Caco-2 (cell line): ENCODE measurements at regions of chr7 and their contacts with region 1.

Region 1: DNA sequence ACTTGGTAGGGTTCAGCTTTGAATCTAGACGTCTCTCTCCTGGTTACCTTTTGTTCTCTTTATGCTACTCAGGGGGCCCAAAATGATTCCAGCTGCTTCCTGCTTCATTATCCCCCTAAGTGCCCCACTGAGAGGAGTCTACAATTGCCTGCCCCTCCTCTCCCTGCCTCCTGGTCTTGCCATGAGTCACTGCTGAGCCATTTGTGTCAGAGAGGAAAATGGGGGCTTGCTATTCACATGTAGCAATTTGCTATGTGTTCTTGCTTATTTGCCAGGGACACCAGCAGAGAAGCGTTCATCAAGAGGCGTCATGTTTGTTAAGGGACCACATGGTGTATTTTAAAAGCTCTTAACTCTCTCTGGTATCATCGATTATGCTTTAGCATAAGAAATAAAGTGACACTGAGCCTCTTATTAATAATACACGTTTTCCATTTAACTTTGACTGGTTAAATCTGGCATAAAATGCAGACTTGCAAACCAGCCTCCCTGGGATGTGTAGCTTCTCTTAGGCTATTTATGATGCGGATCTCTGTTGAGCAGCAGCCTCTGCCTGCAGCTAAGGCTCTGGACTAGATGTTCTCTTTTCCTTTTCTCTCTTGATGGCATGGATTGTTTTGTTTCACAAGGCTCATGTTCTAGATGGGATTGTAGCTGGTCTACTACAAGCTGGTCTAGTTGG is 239.3 kb downstream of the AUTS2 start:
- DNase-seq: no peak
- H3K4me3 ChIP-seq: no peak overlapping the region
- H3K4me3 Mint-ChIP-seq: no peak overlapping the region
- H3K27ac Mint-ChIP-seq: no peak overlapping the region
- H3K4me1 ChIP-seq: no peaks in the 10 kb centered on the region
- H3K4me1 Mint-ChIP-seq: no peaks in the 10 kb centered on the region
- H3K27me3 ChIP-seq: no peaks in the 10 kb centered on the region
- H3K27me3 Mint-ChIP-seq: peaks cover 14% of the 10 kb centered on the region
- CTCF ChIP-seq: no peak

Region 2: DNA sequence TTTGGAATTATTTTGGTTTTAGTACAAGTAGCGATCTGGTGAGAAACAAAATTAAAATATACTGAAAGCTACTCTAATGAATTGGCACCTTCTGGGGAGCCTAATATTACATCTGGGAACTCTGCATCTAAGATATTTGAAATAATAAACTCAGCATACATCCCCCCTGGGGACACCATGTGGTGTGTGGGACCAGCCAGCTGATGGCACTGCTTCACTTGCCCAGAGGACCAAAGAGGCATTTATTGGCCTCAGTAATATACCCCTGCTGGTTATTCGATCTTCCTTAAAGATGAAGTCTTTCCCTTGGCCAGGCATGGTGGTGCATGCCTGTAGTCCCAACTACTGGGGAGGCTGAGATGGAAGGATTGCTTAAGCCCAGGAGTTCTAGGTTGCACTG is 434.4 kb before region 1 on chr7:
- CTCF ChIA-PET with region 1: no interaction called
- POLR2A ChIA-PET with region 1: no interaction called
- intact Hi-C with region 1: no loop called
- DNase-seq: no peak
- H3K4me3 ChIP-seq: no peak overlapping the region
- H3K4me3 Mint-ChIP-seq: no peak overlapping the region
- H3K27ac Mint-ChIP-seq: no peak overlapping the region
- H3K4me1 ChIP-seq: no peaks in the 10 kb centered on the region
- H3K4me1 Mint-ChIP-seq: no peaks in the 10 kb centered on the region
- H3K27me3 ChIP-seq: no peaks in the 10 kb centered on the region
- H3K27me3 Mint-ChIP-seq: no peaks in the 10 kb centered on the region
- CTCF ChIP-seq: no peak

Region 3: DNA sequence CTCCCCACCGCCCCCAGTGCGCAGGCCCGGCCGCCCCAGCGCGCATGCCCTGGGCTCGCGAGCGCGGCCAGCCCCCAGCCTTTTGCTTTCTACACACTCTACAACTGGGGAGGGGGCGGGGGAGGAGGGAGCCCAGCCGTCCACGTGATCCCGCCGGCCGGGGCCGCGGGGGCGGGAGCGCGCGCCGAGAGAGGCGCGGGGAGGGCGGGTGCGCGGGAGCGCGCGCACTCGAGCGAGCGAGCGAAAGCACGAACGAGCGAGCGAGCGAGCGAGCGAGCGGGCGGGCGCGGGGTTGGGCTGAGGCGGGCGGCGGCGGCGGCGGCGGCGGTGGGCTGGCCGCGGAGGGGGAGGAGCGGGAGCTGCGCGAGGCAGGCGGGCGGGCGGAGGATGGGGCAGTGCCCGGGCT is 239.4 kb before region 1 on chr7 and contains the start of gene AUTS2:
- CTCF ChIA-PET with region 1: no interaction called
- POLR2A ChIA-PET with region 1: no interaction called
- intact Hi-C with region 1: loop called (anchors 10 kb)
- DNase-seq: peak; percentile 77 to 82
- H3K4me3 ChIP-seq: peak within 1 kb of the TSS; percentile 57
- H3K4me3 Mint-ChIP-seq: peak within 1 kb of the TSS; percentile 83
- H3K27ac Mint-ChIP-seq: no peak within 1 kb of the TSS
- H3K4me1 ChIP-seq: peaks cover 13% of the 10 kb centered on the region
- H3K4me1 Mint-ChIP-seq: peaks cover 4% of the 10 kb centered on the region
- H3K27me3 ChIP-seq: no peaks in the 10 kb centered on the region
- H3K27me3 Mint-ChIP-seq: peaks cover 6% of the 10 kb centered on the region
- CTCF ChIP-seq: no peak
- total RNA-seq, gene AUTS2: 37.1 and 41.9 TPM in 2 replicates

Region 4: GRCh38 chr7:69610374-69611084 is 227.0 kb before region 1 on chr7:
- CTCF ChIA-PET with region 1: no interaction called
- POLR2A ChIA-PET with region 1: no interaction called
- intact Hi-C with region 1: no loop called
- DNase-seq: no peak
- H3K4me3 ChIP-seq: no peak overlapping the region
- H3K4me3 Mint-ChIP-seq: no peak overlapping the region
- H3K27ac Mint-ChIP-seq: no peak overlapping the region
- H3K4me1 ChIP-seq: no peaks in the 10 kb centered on the region
- H3K4me1 Mint-ChIP-seq: no peaks in the 10 kb centered on the region
- H3K27me3 ChIP-seq: no peaks in the 10 kb centered on the region
- H3K27me3 Mint-ChIP-seq: peaks cover 13% of the 10 kb centered on the region
- CTCF ChIP-seq: no peak

Region 5: DNA sequence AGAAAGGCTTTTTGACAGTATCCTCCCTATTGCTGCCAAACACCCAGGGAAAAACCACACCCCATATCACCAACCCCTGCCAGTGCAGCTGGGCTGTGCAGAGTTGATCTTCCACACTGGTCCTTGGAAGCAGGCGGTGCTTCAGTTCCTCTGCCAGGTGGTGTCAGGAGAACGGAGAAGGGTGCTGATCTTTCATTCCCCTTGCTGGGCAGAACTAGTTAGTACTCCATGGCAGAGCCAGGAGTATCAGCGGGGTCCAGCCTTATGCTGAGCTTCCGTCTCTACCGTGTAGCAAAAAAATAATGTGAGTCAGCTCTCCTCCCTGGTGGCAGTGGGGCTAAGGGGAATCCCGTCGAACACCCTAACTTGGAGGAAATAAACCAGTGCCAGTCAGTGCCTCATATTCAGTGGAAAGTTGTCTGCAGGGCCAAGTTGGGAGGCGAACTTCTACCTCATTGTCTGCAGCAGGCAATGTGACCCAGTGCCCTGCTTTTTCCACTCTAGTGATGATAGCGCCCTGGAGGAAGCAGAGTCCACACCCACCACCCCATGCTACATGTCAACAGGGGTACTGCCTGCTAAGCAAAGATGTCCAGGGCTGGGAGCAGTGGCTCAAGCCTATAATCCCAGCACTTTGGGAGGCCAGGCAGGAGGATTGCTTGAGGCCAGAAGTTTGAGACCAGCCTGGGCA is 63.8 kb before region 1 on chr7:
- CTCF ChIA-PET with region 1: no interaction called
- POLR2A ChIA-PET with region 1: no interaction called
- intact Hi-C with region 1: loop called (anchors 2 kb)
- DNase-seq: no peak
- H3K4me3 ChIP-seq: no peak overlapping the region
- H3K4me3 Mint-ChIP-seq: no peak overlapping the region
- H3K27ac Mint-ChIP-seq: no peak overlapping the region
- H3K4me1 ChIP-seq: no peaks in the 10 kb centered on the region
- H3K4me1 Mint-ChIP-seq: peaks cover 7% of the 10 kb centered on the region
- H3K27me3 ChIP-seq: no peaks in the 10 kb centered on the region
- H3K27me3 Mint-ChIP-seq: no peaks in the 10 kb centered on the region
- CTCF ChIP-seq: no peak

Region 6: GRCh38 chr7:69906283-69906995 is 68.9 kb after region 1 on chr7:
- CTCF ChIA-PET with region 1: no interaction called
- POLR2A ChIA-PET with region 1: no interaction called
- intact Hi-C with region 1: no loop called
- DNase-seq: no peak
- H3K4me3 ChIP-seq: no peak overlapping the region
- H3K4me3 Mint-ChIP-seq: no peak overlapping the region
- H3K27ac Mint-ChIP-seq: no peak overlapping the region
- H3K4me1 ChIP-seq: peaks cover 14% of the 10 kb centered on the region
- H3K4me1 Mint-ChIP-seq: peaks cover 11% of the 10 kb centered on the region
- H3K27me3 ChIP-seq: peaks cover 4% of the 10 kb centered on the region; the same call in 1 of the 2 replicates
- H3K27me3 Mint-ChIP-seq: peaks cover 8% of the 10 kb centered on the region
- CTCF ChIP-seq: no peak